GM10248 (cell line): ENCODE measurements at regions of chr3 and their contacts with region 1.

Region 1: DNA sequence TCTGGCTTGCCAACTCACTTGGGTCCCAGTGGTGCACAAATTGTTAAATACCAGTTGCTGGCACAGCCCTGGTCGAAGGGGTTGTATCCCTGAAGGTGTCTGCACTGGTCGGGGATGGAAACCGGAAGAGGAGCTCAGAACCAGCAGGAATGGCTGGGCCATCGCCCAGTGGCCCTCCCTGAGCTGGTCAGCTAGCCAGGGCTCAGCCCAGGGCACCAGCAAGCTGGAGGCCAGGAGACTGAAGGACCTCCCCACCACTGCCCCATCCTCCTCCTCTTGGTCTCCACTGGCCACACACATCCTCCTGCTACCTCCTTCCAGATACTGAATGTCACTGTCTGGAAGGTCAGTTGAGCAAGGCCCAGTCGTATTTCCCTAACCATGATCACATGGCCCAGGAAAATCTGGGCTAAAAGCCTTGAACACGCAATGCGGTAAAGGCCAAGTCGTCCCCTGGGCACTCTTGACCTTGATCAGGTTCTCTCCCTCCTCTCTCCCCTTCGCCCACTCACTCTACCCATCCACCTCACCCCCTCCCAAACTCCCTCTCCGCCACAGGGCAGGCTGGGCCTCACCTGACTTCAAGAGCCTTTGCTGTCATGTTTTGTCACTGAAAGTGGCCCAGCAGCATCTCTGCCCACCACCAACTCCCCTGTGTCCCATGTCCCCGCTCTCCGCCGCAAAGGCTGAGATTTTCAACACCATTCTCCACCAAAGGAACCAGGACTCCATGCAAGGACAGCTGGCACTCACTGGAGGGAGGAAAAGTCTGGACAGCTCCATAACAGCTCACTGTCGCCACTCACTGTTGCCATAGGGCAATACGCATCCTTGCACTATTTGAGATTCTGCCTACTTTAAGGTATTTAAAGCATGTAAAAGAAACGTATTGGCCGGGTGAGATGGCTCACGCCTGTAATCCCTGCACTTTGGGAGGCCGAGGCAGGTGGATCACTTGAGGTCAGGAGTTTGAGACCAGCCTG is 12.1 kb downstream of the ZDHHC19 start:
- DNase-seq: no peak
- CTCF ChIP-seq: no peak

Region 2: GRCh38 chr3:195790614-195791300 is 408.3 kb before region 1 on chr3:
- CTCF ChIA-PET with region 1: no interaction called
- POLR2A ChIA-PET with region 1: no interaction called
- DNase-seq: no peak
- CTCF ChIP-seq: no peak

Region 3: GRCh38 chr3:196016485-196016884 is 182.6 kb before region 1 on chr3:
- CTCF ChIA-PET with region 1: interaction called, 63 read pairs
- POLR2A ChIA-PET with region 1: no interaction called
- DNase-seq: no peak
- CTCF ChIP-seq: no peak

Region 4: DNA sequence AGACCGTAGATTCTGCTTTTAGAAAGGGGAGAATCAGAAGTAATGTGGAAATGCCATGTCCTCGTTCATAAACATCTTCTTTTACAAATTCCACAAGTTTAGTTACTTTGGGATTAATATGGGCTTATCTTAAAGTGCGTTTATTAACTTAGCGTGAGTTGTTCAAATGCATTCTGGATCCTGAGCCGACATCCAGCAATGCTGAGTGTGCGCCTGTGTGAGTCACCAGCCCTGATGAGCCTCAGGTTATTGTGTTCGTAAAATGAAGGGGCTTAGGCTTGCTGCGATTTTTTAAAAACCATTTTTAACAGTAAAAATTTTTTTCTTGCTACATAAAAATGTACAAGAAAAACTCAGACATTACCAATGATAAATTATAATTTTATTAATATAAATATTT is 175.1 kb before region 1 on chr3:
- CTCF ChIA-PET with region 1: interaction called, 63 read pairs
- POLR2A ChIA-PET with region 1: no interaction called
- DNase-seq: no peak
- CTCF ChIP-seq: no peak

Region 5: DNA sequence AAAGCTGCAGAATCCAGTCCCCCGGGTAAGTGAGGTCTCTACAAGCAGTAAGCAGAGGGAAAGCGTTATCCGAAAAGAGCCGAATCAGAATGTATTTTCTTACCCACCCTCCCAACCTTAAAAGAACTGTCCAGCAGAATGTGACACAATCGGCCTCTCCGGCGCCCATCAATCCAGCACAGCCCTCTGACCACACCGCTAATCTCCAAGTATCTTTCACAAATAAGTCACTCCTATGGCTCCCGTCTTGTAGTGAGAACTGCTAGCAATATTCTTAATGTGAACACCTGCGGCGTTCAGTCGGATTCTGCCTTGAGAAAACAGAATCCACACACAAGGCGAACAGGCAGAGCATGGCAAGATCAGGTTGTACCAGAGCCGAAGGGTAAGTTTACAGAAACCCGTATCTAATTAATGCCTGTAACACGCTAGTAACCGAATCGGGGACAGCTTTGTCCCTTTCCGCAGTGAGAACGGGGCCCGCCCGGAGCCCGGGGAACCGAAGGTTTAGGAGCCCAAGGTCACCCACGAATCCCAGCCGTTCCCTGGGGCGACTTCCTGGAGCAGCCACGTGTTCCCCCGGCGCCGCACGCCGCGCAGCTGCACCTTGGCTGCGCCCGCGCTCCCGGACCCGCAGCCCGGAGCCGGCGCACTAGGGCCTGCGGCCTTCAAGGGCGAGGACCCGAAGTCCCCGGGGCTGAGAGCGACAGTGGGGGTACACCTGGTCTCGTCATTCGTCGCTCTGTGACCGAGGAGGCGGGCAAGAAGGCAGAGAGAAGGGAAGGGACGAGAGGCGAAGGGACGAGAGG is 117.9 kb before region 1 on chr3:
- CTCF ChIA-PET with region 1: interaction called, 195 read pairs
- POLR2A ChIA-PET with region 1: no interaction called
- DNase-seq: peak; percentile 46
- CTCF ChIP-seq: no peak

Region 6: DNA sequence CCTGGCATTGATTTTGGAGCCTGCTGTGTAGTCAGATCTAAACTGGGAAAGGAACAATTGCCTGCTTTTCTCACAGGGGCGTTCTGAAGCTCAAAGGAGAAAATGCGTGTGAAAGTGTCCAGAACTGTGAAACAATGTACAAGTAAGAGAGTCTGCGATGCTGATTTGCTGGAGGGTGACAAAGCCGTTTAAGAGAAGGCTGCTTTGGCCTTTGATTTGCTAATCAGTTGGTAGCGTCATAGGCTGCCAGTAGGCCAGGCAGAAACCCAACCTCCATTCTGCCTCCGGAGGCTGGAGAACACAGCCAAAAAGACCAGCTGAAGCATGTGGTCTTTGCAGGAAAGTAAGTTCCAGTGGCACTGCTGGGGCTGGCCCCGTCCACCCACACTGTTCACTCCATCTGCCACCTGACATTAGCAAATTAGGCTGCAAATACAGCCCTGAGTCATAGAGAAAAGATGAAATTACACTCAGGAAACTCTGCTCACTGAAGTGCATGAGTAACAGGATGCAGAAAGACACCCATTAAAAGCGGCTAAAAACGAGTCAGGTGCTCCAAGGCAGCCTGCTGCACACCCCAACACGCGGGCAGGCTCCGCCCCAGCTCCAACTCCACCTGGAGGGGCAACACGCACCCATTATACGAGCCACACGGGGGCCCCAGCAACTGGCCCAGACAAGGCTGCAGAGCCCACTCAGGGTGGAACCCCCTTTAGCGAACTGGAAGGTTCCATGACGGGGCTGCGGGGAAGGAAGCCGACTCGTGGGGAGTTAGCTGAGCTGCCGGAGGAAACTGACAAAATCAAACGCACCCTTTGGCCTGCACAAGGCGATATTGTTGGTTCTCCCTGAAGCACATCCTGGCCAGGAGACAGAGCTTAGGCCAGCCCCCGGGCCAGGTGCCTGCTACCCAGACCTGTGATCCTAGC is 19.4 kb before region 1 on chr3:
- CTCF ChIA-PET with region 1: interaction called, 23 read pairs
- POLR2A ChIA-PET with region 1: no interaction called
- DNase-seq: peak; percentile 84
- CTCF ChIP-seq: peak; percentile 34

Region 7: DNA sequence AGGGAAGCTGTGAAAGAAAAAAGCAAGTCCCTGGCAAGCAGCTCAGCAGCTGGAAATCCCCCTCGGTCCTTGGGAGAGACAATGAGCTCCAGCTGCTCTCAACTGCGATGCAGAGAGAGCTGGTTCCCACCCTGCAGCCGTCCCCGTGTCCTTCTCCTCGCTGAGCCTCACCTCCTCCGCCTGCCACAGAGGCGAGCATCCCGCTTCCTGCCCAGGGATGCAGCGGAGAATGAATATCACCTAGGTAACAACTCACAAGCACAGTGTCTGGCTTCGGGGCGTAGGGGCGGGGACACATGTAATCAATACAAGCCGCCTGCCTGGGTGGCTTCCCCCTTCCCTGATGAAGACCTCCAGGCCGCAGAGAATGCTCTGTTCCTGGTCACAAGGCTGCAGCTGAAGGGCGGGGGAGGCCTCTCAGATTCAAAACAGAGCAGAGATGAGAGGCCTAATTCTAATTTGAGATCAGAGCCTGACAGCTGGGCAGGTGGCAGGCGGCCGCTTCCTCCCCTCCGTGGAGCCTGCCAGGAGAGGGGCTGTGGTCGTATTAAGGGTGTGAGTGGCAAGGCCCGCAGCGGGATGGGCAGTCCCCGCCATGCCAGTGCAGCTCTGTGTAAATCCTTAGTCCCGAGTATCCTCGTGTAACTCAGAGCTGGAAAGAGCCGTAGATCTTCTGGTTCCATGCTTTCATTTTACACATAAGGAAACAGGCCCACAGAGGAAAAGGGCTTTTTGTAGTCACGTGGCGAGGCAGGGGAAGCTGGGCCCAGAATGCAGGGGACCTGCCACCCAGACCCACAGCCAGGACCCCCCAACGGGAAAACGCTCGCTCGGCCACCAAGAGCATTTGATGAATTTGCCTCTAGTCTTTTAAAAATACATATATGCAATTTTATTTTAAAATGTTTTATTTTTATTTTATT is 12.2 kb before region 1 on chr3:
- CTCF ChIA-PET with region 1: interaction called, 25 read pairs
- POLR2A ChIA-PET with region 1: no interaction called
- DNase-seq: peak; percentile 60
- CTCF ChIP-seq: no peak

Region 8: GRCh38 chr3:196388956-196389355 is 189.9 kb after region 1 on chr3:
- CTCF ChIA-PET with region 1: no interaction called
- POLR2A ChIA-PET with region 1: no interaction called
- DNase-seq: no peak
- CTCF ChIP-seq: no peak